ENCODE measurements at regions of chr2 and their contacts with region 1.

Region 1: GRCh38 chr2:232611551-232612218 is 21.7 kb upstream of the EFHD1 start:
- DNase-seq: peak; percentile 44
- H3K4me3 Mint-ChIP-seq: no peak overlapping the region
- H3K27ac Mint-ChIP-seq: no peak overlapping the region
- H3K4me1 Mint-ChIP-seq: no peaks in the 10 kb centered on the region
- H3K27me3 Mint-ChIP-seq: peaks cover 5% of the 10 kb centered on the region

Region 2: DNA sequence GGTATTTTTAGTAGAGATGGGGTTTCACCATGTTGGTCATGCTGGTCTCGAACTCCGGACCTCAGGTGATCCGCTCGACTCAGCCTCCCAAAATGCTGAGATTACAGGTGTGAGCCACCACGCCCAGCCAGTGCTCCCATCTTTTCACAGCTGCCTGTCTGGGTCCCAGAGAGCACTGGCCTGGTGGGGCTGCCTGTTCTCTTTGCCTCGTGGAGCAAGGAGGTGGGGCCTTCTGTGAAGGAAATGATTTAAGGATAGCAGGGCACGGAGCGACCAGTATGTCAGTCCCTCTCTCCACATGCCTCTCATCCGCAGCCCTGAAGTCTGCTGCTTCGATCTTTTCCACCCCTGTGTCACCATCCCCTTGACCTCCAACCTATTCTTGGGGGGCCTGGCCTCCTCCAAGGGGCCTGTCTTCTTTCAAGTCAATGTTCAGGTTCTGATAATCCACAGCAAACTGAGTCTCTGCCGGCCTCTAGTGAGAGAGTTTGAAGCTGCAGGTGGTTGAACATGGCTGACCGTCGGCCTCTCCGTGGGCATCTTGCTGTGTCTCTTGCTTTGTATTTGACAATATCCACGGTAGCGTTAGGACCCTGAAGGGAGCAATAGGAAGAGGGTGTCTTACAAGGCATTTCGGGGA is 57.2 kb after region 1 on chr2:
- intact Hi-C with region 1: loop called (anchors 1 kb)
- DNase-seq: no peak
- H3K4me3 Mint-ChIP-seq: no peak overlapping the region
- H3K27ac Mint-ChIP-seq: no peak overlapping the region
- H3K4me1 Mint-ChIP-seq: no peaks in the 10 kb centered on the region
- H3K27me3 Mint-ChIP-seq: peaks cover 9% of the 10 kb centered on the region

Region 3: DNA sequence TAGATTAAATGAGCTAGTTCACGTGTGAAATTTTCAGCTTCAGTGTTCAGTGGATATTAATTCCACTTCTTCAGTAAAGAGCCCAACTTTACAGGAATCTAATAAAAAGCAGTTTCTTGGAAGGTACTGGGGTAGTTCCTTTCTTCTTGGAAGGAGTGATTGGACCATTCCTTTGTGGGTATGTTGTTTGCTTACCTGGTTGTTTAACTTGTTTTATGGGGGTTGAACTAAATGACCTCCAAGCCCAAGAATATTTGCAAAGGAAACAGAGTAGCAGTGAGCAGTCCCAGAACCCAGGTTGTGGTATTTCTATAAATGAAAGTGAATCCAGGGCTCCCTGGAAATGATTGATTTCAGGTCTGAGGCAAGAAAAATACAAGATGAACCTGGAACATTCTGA is 133.3 kb after region 1 on chr2:
- intact Hi-C with region 1: loop called (anchors 5 kb)
- DNase-seq: no peak
- H3K4me3 Mint-ChIP-seq: no peak overlapping the region
- H3K27ac Mint-ChIP-seq: no peak overlapping the region
- H3K4me1 Mint-ChIP-seq: peaks cover 20% of the 10 kb centered on the region
- H3K27me3 Mint-ChIP-seq: no peaks in the 10 kb centered on the region

Region 4: DNA sequence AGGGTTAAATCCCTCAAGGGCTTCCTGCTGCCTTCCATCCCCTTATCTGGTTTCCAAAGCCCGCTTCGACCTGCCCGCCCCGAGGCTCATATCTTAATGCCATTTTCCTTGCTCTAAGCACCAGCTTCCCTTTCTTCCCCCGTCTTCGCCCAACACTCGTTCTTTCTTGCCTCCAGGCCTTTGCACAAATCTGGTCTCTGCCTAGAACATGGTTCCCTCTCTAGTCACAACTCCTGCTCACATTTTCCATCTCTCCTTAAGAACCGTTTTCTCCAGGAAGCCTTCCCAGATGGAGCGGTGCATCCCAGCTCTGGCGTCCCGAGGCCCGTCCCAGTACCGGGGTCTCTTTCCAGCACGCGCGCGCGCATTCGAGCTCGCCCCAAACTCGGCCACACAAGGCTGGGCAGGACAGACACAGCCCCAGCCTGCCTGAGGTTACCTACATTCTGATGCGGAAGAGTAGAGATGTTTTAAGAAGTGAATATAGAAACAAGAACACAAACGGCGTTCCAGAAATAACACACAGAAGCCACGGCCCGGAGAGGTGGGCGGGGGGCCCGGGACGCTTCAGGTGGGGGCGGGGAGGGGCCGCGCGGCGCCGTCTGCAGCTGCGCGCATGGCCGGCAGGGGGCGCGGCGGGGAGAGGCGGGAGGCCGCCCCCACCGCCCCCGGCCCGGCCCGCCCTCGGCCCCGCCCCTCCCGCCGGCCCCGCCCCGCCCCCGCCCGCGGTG is 742.2 kb after region 1 on chr2 and contains the start of gene DGKD:
- intact Hi-C with region 1: loop called (anchors 2 kb)
- DNase-seq: no peak
- H3K4me3 Mint-ChIP-seq: peak within 1 kb of the TSS; percentile 87
- H3K27ac Mint-ChIP-seq: peak within 1 kb of the TSS; percentile 90
- H3K4me1 Mint-ChIP-seq: peaks cover 67% of the 10 kb centered on the region
- H3K27me3 Mint-ChIP-seq: no peaks in the 10 kb centered on the region
- total RNA-seq, gene DGKD: 42.5 and 43.7 TPM in 2 replicates

Region 5: DNA sequence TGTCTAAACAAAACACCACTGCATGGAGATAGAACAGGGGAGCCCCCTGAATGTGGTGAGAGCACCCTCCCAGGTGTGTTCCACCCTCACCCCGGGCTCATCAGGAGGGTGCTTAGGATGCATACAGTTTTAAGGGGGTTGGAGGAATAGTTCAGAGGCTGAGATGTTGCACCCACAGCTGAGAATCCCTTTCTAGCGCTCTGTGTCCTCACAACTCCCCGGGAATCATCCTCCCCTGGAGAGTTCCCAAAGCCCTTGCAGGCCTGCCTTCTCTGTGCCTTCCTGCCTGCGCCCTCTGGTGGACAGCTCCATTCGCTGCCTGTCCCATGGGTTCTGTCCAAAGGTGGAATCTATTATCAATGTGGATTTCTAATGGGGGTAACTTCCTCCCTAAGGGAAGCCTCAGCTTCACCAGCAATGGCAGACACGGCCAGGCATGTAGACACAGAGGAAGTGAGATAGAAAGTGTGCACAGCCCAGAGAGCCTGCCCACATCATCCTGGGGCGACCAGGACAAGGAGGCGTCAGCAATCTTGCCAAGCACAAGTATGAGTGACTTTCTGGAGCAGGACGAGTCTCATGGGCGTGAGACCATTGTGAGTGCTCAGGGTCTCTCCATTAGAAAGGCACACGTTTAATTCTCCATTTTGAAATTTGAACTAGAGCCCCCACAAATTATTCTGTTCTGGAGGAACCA is 1099.8 kb after region 1 on chr2:
- intact Hi-C with region 1: loop called (anchors 5 kb)
- DNase-seq: peak; percentile 40
- H3K4me3 Mint-ChIP-seq: no peak overlapping the region
- H3K27ac Mint-ChIP-seq: no peak overlapping the region
- H3K4me1 Mint-ChIP-seq: no peaks in the 10 kb centered on the region
- H3K27me3 Mint-ChIP-seq: peaks cover 11% of the 10 kb centered on the region

Measured in activated T-helper 1 cell treated with anti-CD3 and anti-CD28 coated beads, Interleukin-12 subunit alpha, Interleukin-12 subunit beta, Interleukin-2, Interleukin-4 antibody, amounts not matched to agents 30 ng/mL and 10 ng/mL and 1 ng/mL, durations not matched to agents 14 hours and 24 hours and 36 hours (primary cell).